ENCODE measurements at regions of chr22 and their contacts with region 1.

Region 1: GRCh38 chr22:39532215-39533071 is at the start of gene RPS19BP1:
- DNase-seq: peak; percentile 96 to 99 (median 98)

Region 2: DNA sequence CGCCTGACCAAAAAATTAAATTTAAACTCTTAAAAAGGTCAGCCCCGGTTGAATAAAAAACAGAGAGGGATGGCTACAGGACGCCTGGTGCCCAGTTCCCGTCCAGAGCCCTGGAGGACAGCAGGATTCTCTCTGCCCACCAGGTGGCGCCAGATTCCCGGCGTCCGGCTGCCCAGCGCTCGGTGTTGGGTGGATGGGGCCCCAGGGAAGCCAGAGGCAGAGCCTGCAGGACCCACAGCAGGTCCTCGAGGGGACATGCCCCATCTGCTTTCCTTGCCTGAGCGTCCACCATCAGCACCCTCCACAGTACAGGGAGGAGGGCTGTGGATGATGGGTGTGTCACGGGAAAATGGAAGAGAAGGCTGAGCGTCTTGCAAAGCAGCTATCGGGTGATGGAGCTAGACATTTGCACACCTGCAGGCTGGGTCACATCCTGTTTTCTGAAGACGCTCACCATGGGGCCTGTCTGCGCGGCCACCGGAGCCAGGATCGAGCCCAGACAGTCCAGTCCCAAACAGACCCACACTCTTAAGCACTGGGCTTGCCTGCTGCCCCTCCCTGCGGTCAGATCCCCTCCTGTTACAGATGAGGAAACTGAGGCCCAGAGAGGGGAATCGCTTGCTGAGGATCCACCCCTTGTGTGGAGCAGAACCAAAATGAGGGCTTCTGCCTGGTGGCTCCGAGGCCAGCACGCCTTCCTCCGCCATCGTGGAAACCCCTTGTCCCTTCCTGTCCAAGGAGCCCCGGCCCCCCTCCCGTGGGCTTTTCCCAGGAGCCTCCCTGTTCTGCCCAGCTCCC is 361.4 kb before region 1 on chr22:
- intact Hi-C with region 1: loop called (anchors 5 kb)
- DNase-seq: peak; percentile 75 to 98 (median 90)

Region 3: GRCh38 chr22:39343259-39344048 is 189.0 kb before region 1 on chr22:
- intact Hi-C with region 1: loop called (anchors 2 kb)
- DNase-seq: peak; percentile 52 to 96 (median 74)

Region 4: GRCh38 chr22:39490135-39490798 is 42.2 kb before region 1 on chr22:
- intact Hi-C with region 1: loop called (anchors 5 kb)
- DNase-seq: peak; percentile 73 to 98 (median 88)

Region 5: DNA sequence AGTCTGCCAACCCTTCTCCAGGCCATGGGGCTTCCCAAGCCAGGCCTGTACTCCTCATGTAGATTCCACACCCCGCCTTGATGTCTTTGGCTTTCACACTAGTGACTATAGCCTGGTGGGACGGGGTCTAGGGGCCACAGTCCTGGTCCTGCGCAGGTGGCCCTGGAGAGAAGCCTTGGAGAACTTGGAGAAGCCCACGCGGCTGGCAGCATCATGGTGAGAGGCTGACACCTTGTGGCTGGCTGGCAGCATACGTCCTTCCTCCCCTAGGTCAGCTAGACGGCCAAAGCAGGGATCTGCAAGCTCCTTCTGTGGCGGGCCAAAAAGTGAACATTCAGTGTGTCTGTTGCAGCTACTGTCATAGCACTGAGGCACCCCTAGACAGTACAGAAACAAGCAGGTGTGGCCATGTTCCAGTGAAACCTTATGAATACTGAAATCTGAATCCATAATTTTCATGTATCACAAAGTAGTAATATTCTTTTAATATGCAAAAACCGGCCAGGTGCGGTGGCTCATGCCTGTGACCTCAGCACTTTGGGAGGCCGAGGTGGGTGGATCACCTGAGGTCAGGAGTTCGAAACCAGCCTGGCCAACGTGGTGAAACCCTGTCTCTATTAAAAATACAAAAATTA is 504.3 kb after region 1 on chr22:
- intact Hi-C with region 1: loop called (anchors 5 kb)
- DNase-seq: peak; percentile 50 to 95 (median 72)

Region 6: GRCh38 chr22:40346178-40347118 is 814.0 kb after region 1 on chr22 and contains the start of gene ADSL:
- intact Hi-C with region 1: loop called (anchors 5 kb)
- DNase-seq: peak; percentile 78 to 98 (median 87)